Naive thymus-derived CD4-positive, alpha-beta T cell (primary cell): ENCODE measurements at regions of chr17 and their contacts with region 1.

Region 1: DNA sequence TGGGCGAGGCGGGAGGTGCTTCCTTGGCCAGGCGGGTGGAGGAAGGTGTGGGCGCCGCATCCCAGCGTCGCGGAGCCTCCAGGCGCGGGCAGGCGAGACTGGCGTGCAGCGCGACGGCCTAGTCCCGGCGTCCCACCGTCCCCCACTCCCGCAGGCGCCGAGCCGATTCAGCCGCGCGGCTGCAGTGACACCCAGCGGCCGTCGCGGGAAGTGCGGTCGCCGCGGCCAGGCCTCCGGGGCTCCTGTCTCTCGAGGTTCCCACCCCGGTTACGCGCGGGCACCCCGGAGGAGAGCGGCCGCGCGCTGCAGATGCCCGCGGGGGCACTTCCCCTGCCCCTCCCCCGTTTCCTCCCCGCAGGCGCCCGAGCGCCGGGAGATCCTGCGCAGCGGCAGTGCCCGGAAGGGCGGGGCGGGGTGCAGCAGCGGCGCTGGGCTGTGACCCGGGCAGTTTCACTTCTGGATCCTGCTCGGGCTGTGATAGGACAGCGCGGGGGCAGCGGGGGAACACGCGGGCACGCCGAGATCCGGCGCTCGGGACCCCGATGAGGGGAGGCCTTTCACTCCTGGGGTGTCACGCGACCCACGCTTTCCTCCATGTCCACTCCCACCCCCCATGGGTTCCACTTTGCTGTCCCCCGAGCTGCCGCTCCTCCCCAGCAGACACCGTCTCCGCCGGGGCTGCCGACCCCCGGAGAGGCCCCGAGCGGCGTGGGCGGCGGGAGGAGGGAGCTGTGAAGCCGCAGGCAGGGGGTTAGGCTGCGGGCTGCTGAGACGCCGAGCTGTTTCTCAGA is 16.6 kb downstream of the GRB7 start:
- DNase-seq: peak; percentile 94 to 99 (median 99)
- ATAC-seq: peak; percentile 90
- H3K4me3 ChIP-seq: peak overlapping the region; percentile 76
- H3K4me3 Mint-ChIP-seq: peak overlapping the region; percentile 63 to 92 (median 82)
- H3K27ac ChIP-seq: peak overlapping the region; percentile 87
- H3K27ac Mint-ChIP-seq: peak overlapping the region; percentile 87 to 99 (median 97)
- H3K4me1 ChIP-seq: peaks cover 43 to 59% of the 10 kb centered on the region in 2 donors
- H3K4me1 Mint-ChIP-seq: peaks cover 37 to 59% (median 53%) of the 10 kb centered on the region in 7 donors
- H3K27me3 ChIP-seq: no peaks in the 10 kb centered on the region
- H3K27me3 Mint-ChIP-seq: no peaks in the 10 kb centered on the region

Region 2: GRCh38 chr17:39547713-39548478 is 206.5 kb before region 1 on chr17:
- CTCF ChIA-PET with region 1: no interaction called
- POLR2A ChIA-PET with region 1: no interaction called
- intact Hi-C with region 1: loop called in 1 of 2 experiments (anchors 1 kb)
- DNase-seq: peak; percentile 43 to 81 (median 68)
- ATAC-seq: peak; percentile 87
- H3K4me3 ChIP-seq: no peak overlapping the region
- H3K4me3 Mint-ChIP-seq: no peak overlapping the region
- H3K27ac ChIP-seq: no peak overlapping the region
- H3K27ac Mint-ChIP-seq: no peak overlapping the region
- H3K4me1 ChIP-seq: no peaks in the 10 kb centered on the region
- H3K4me1 Mint-ChIP-seq: peaks cover 0 to 2% (median 0%) of the 10 kb centered on the region in 7 donors
- H3K27me3 ChIP-seq: no peaks in the 10 kb centered on the region
- H3K27me3 Mint-ChIP-seq: no peaks in the 10 kb centered on the region

Region 3: GRCh38 chr17:39687811-39688518 is 66.4 kb before region 1 on chr17 and contains the start of gene PGAP3:
- CTCF ChIA-PET with region 1: interaction called, 3 read pairs
- POLR2A ChIA-PET with region 1: interaction called, 7 read pairs
- intact Hi-C with region 1: loop called in 1 of 2 experiments (anchors 1 kb)
- DNase-seq: peak; percentile 71 to 86 (median 83)
- ATAC-seq: peak; percentile 95
- H3K4me3 ChIP-seq: peak within 1 kb of the TSS; percentile 93
- H3K4me3 Mint-ChIP-seq: peak within 1 kb of the TSS; percentile 87 to 99 (median 98)
- H3K27ac ChIP-seq: peak within 1 kb of the TSS; percentile 77
- H3K27ac Mint-ChIP-seq: peak within 1 kb of the TSS; percentile 93 to 99 (median 98)
- H3K4me1 ChIP-seq: peaks cover 8 to 18% of the 10 kb centered on the region in 2 donors
- H3K4me1 Mint-ChIP-seq: peaks cover 19 to 32% (median 30%) of the 10 kb centered on the region in 7 donors
- H3K27me3 ChIP-seq: no peaks in the 10 kb centered on the region
- H3K27me3 Mint-ChIP-seq: no peaks in the 10 kb centered on the region
- total RNA-seq, gene PGAP3: 26.3 to 39.9 (median 35.1) TPM

Region 4: DNA sequence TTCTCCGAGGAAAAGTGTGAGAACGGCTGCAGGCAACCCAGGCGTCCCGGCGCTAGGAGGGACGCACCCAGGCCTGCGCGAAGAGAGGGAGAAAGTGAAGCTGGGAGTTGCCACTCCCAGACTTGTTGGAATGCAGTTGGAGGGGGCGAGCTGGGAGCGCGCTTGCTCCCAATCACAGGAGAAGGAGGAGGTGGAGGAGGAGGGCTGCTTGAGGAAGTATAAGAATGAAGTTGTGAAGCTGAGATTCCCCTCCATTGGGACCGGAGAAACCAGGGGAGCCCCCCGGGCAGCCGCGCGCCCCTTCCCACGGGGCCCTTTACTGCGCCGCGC is 54.6 kb before region 1 on chr17 and contains the start of gene ERBB2:
- CTCF ChIA-PET with region 1: no interaction called
- POLR2A ChIA-PET with region 1: no interaction called
- intact Hi-C with region 1: no loop called
- DNase-seq: no peak
- ATAC-seq: no peak
- H3K4me3 ChIP-seq: no peak within 1 kb of the TSS
- H3K4me3 Mint-ChIP-seq: peak within 1 kb of the TSS in 9 of 10 donors; percentile 18 to 72 (median 45)
- H3K27ac ChIP-seq: no peak within 1 kb of the TSS
- H3K27ac Mint-ChIP-seq: peak within 1 kb of the TSS in 1 of 9 donors; percentile 13
- H3K4me1 ChIP-seq: no peaks in the 10 kb centered on the region
- H3K4me1 Mint-ChIP-seq: peaks cover 5 to 18% (median 10%) of the 10 kb centered on the region in 7 donors
- H3K27me3 ChIP-seq: peaks cover 3 to 14% of the 10 kb centered on the region in 2 donors
- H3K27me3 Mint-ChIP-seq: peaks cover 28 to 48% (median 29%) of the 10 kb centered on the region in 5 donors
- total RNA-seq, gene ERBB2: 3.6 to 10.5 (median 6.6) TPM

Region 5: GRCh38 chr17:39794249-39794970 is 40.1 kb after region 1 on chr17:
- CTCF ChIA-PET with region 1: interaction called, 6 read pairs
- POLR2A ChIA-PET with region 1: interaction called, 30 read pairs
- intact Hi-C with region 1: loop called (anchors 5 kb)
- DNase-seq: peak in 7 of 9 donors; percentile 28 to 67 (median 44)
- ATAC-seq: peak; percentile 83
- H3K4me3 ChIP-seq: peak overlapping the region; percentile 2
- H3K4me3 Mint-ChIP-seq: peak overlapping the region; percentile 37 to 82 (median 76)
- H3K27ac ChIP-seq: peak overlapping the region; percentile 65
- H3K27ac Mint-ChIP-seq: peak overlapping the region; percentile 86 to 96 (median 93)
- H3K4me1 ChIP-seq: peaks cover 56 to 66% of the 10 kb centered on the region in 2 donors
- H3K4me1 Mint-ChIP-seq: peaks cover 49 to 86% (median 82%) of the 10 kb centered on the region in 7 donors
- H3K27me3 ChIP-seq: no peaks in the 10 kb centered on the region
- H3K27me3 Mint-ChIP-seq: no peaks in the 10 kb centered on the region

Region 6: GRCh38 chr17:39845052-39845846 is 90.9 kb after region 1 on chr17:
- CTCF ChIA-PET with region 1: interaction called, 3 read pairs
- POLR2A ChIA-PET with region 1: interaction called, 27 read pairs
- intact Hi-C with region 1: no loop called
- DNase-seq: no peak
- ATAC-seq: no peak
- H3K4me3 ChIP-seq: no peak overlapping the region
- H3K4me3 Mint-ChIP-seq: peak overlapping the region in 3 of 10 donors; percentile 2 to 30 (median 12)
- H3K27ac ChIP-seq: peak overlapping the region; percentile 57
- H3K27ac Mint-ChIP-seq: peak overlapping the region in 8 of 9 donors; percentile 68 to 94 (median 87)
- H3K4me1 ChIP-seq: peaks cover 32 to 36% of the 10 kb centered on the region in 2 donors
- H3K4me1 Mint-ChIP-seq: peaks cover 38 to 94% (median 83%) of the 10 kb centered on the region in 7 donors
- H3K27me3 ChIP-seq: no peaks in the 10 kb centered on the region
- H3K27me3 Mint-ChIP-seq: no peaks in the 10 kb centered on the region

Region 7: DNA sequence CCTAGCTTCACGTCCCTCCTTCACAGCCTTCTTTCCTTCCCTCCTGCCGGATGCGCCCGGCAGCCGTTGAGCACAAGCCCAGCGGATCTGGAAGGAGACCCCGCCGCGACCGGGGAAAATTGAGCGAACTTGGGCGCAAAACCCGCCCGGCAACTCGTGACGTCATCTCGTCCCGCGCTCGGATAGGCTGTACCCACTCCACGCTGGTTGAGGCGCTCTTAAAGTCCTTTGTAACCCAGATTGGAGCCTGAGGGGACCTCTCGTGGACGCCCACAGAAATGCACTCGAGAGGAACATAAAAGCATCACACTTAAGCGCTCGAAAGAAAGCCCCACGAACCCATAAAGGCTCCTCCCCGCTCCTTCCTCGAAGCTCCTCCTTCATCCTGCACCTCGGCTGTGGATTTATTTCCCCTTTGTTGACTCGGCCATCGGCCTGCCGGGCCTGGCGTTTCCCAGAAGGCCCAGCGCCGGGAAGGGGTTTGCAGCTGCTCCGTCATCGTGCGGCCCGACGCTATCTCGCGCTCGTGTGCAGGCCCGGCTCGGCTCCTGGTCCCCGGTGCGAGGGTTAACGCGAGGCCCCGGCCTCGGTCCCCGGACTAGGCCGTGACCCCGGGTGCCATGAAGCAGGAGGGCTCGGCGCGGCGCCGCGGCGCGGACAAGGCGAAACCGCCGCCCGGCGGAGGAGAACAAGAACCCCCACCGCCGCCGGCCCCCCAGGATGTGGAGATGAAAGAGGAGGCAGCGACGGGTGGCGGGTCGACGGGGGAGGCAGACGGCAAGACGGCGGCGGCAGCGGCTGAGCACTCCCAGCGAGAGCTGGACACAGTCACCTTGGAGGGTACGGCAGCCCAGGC is 226.2 kb after region 1 on chr17 and contains the start of gene PSMD3:
- CTCF ChIA-PET with region 1: interaction called, 4 read pairs
- POLR2A ChIA-PET with region 1: interaction called, 8 read pairs
- intact Hi-C with region 1: loop called (anchors 1 kb)
- DNase-seq: peak; percentile 86 to 99 (median 98)
- ATAC-seq: peak; percentile 97
- H3K4me3 ChIP-seq: peak within 1 kb of the TSS; percentile 63
- H3K4me3 Mint-ChIP-seq: peak within 1 kb of the TSS; percentile 89 to 97 (median 94)
- H3K27ac ChIP-seq: peak within 1 kb of the TSS; percentile 91
- H3K27ac Mint-ChIP-seq: peak within 1 kb of the TSS; percentile 89 to 96 (median 93)
- H3K4me1 ChIP-seq: peaks cover 17 to 23% of the 10 kb centered on the region in 2 donors
- H3K4me1 Mint-ChIP-seq: peaks cover 24 to 50% (median 46%) of the 10 kb centered on the region in 7 donors
- H3K27me3 ChIP-seq: no peaks in the 10 kb centered on the region
- H3K27me3 Mint-ChIP-seq: peaks cover 0 to 13% (median 0%) of the 10 kb centered on the region in 5 donors
- total RNA-seq, gene PSMD3: 55.7 to 111 (median 68.9) TPM